Activated B cell treated with CpG ODN at 0.5 μM for 24 hours (primary cell): ENCODE measurements at regions of chr12 and their contacts with region 1.

Region 1: DNA sequence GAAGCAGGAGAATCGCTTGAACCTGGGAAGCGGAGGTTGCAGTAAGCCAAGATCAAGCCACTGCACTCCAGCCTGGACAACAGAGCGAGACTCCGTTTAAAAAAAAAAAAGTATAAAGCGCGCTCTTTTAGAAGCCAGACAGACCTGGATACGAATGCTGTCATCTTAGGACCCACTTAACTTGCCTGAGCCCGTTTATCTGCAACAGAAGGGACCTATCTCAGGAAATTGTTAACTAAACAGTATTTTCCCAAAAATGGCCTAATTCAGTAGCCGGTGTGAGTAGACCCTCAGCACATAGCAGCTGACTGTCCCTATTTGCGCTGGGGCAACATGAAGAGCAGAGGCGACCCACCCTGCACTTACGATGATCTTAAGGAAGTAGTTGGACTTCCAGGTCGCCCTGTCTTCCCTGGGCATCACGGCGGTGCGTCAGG is 529 bp downstream of the RPLP0 start:
- DNase-seq: no peak
- ATAC-seq: no peak
- H3K4me3 Mint-ChIP-seq: peak overlapping the region; percentile 95
- H3K27ac Mint-ChIP-seq: peak overlapping the region; percentile 98
- H3K4me1 Mint-ChIP-seq: peaks cover 42% of the 10 kb centered on the region
- H3K27me3 Mint-ChIP-seq: no peaks in the 10 kb centered on the region
- CTCF ChIP-seq: no peak

Region 2: DNA sequence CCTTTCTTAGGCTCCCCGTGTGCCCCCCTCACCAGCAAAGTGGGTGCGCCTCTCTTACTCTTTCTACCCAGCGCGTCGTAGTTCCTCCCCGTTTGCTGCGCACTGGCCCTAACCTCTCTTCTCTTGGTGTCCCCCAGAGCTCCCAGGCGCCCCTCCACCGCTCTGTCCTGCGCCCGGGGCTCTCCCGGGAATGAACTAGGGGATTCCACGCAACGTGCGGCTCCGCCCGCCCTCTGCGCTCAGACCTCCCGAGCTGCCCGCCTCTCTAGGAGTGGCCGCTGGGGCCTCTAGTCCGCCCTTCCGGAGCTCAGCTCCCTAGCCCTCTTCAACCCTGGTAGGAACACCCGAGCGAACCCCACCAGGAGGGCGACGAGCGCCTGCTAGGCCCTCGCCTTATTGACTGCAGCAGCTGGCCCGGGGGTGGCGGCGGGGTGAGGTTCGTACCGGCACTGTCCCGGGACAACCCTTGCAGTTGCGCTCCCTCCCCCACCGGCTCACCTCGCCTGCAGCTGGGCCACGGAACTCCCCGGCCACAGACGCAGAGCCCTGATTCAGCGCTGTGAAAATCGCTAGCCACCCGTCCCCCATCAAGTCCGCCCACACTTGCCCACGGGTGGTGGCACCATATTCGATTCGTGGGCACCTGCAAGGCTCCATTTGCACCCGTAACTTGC is 605.5 kb before region 1 on chr12:
- CTCF ChIA-PET with region 1: no interaction called
- POLR2A ChIA-PET with region 1: no interaction called
- intact Hi-C with region 1: no loop called
- DNase-seq: no peak
- ATAC-seq: no peak
- H3K4me3 Mint-ChIP-seq: no peak overlapping the region
- H3K27ac Mint-ChIP-seq: no peak overlapping the region
- H3K4me1 Mint-ChIP-seq: peaks cover 6% of the 10 kb centered on the region
- H3K27me3 Mint-ChIP-seq: peaks cover 67% of the 10 kb centered on the region
- CTCF ChIP-seq: no peak

Region 3: GRCh38 chr12:119902084-119902509 is 298.3 kb before region 1 on chr12:
- CTCF ChIA-PET with region 1: no interaction called
- POLR2A ChIA-PET with region 1: no interaction called
- intact Hi-C with region 1: no loop called
- DNase-seq: peak; percentile 27
- ATAC-seq: peak; percentile 82
- H3K4me3 Mint-ChIP-seq: no peak overlapping the region
- H3K27ac Mint-ChIP-seq: no peak overlapping the region
- H3K4me1 Mint-ChIP-seq: peaks cover 4% of the 10 kb centered on the region
- H3K27me3 Mint-ChIP-seq: no peaks in the 10 kb centered on the region
- CTCF ChIP-seq: no peak

Region 4: GRCh38 chr12:119988782-119989668 is 211.4 kb before region 1 on chr12 and contains the start of gene BICDL1:
- CTCF ChIA-PET with region 1: no interaction called
- POLR2A ChIA-PET with region 1: interaction called, 27 read pairs
- intact Hi-C with region 1: loop called (anchors 1 kb)
- DNase-seq: peak; percentile 96
- ATAC-seq: peak; percentile 83
- H3K4me3 Mint-ChIP-seq: peak within 1 kb of the TSS; percentile 83
- H3K27ac Mint-ChIP-seq: peak within 1 kb of the TSS; percentile 85
- H3K4me1 Mint-ChIP-seq: peaks cover 23% of the 10 kb centered on the region
- H3K27me3 Mint-ChIP-seq: no peaks in the 10 kb centered on the region
- CTCF ChIP-seq: no peak
- total RNA-seq, gene BICDL1: 15.1 and 16.8 TPM in 2 replicates

Region 5: DNA sequence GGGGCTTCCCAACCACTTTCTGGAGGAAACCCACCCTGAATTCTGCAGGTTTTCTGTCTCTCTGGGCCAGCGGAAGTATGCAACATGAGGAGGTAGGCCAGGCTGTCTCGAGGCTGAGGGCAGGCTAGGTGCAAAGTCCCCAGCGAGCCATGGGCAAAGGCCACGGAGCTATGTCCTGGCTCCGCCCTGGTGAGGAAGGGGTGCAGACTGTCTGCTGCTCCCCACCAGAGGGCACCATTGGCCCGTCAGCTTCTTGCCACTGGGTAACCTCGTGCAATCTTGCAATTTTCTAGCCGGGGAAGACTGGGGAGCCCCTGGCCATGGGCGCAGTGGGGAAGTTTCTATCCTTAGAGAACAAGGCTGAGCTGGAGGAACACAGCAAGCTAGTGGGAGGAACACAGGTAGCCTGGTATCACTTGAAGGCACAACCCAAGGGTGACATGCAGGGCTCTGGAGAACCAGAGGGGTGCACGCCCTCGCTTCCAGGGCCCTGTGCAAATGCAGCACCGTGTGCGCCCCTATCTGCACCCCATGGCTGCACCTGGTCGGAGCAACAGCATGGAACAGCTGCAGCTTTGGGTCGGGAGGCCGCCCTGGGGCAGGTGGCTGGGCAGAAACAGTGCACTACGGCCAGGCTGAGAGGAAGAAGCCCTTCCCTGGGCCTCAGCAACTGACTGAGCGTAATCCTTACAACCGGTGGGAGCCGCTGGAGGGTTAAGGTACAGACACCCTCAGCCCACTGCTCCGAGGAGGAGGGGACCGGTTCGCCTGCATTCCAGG is 28.1 kb after region 1 on chr12:
- CTCF ChIA-PET with region 1: interaction called, 14 read pairs
- POLR2A ChIA-PET with region 1: interaction called, 53 read pairs
- intact Hi-C with region 1: loop called (anchors 2 kb)
- DNase-seq: peak; percentile 74
- ATAC-seq: peak; percentile 93
- H3K4me3 Mint-ChIP-seq: no peak overlapping the region
- H3K27ac Mint-ChIP-seq: no peak overlapping the region
- H3K4me1 Mint-ChIP-seq: peaks cover 44% of the 10 kb centered on the region
- H3K27me3 Mint-ChIP-seq: peaks cover 25% of the 10 kb centered on the region
- CTCF ChIP-seq: peak; percentile 39

Region 6: DNA sequence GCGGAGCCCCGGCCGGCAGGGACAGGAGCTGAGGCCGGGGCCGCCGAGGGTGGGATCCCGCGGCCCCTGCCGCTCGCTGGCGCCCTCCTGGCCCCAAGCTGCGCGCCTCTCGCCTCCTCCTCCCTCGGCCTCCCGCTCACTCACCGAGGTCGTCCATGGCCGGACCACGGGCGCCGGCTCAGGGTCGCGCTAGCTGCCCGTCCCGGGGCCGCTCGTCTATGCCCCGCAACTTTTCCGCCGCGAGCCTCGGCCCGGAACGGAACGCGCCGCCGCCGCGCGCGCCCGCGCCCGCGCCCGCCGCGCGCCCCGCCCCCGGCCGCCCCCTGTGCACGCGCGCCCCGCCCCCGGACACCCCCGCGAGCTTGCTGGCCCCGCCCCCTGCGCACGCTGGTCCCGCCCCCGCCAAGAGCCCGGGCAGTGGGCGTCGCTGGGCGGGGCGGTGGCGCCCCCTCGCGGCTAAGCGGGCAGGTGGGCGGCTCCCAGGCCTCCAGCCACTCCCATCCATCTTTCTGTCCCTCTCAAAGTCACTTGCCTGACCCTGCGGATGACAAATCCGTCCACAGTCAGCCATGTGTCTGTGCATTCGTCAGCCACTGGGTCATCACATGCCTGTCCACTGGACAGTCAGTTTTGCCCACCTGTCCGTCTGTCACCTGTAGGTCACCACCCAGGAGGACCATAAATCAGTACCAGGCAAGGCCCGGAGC is 65.2 kb after region 1 on chr12 and contains the start of gene PXN:
- CTCF ChIA-PET with region 1: interaction called, 13 read pairs
- POLR2A ChIA-PET with region 1: interaction called, 30 read pairs
- intact Hi-C with region 1: loop called (anchors 1 kb)
- DNase-seq: peak; percentile 87
- ATAC-seq: peak; percentile 95
- H3K4me3 Mint-ChIP-seq: peak within 1 kb of the TSS; percentile 86
- H3K27ac Mint-ChIP-seq: peak within 1 kb of the TSS; percentile 59
- H3K4me1 Mint-ChIP-seq: peaks cover 18% of the 10 kb centered on the region
- H3K27me3 Mint-ChIP-seq: peaks cover 20% of the 10 kb centered on the region
- CTCF ChIP-seq: no peak
- total RNA-seq, gene PXN: 1.7 and 2.9 TPM in 2 replicates

Region 7: DNA sequence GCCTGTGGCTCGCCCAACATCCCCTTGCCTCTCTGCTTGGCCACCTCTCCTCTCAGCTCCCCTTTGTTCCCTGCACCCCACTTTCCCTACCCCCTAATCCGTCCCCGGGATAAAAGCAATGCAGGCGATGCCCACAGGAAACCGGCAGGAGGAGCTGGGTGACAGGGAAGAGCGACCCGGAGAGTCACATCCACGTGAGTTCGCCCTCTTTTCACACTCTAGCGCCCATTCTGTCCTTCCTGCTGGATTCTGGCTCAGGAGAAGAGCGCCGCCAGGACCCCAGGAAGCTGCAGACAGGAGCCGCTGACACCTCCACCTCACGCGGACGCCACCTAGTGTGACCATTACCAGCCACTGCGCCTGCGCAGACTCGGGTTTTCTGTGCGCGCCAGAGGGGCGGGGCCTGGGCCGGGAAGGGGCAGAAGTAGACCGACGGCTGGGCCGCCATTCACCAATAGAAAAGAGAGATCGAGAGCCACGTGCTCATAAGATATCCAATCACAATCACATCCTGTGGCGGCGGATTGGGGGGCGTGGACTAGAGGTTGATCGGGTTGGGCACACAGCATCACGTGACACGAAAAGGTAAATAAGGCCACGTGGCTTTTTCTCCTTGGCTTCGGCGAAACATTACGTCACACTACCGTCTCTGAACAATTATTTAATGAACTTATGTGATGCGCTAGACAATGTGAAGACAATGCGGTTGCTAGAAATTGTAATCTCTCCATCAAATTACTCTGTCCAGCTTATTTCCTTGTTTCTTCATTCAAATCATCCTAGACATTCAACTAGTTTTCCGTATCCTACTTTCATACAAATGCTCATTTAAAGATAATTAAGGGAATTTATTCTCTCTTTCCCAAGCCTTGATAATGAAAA is 117.1 kb after region 1 on chr12:
- CTCF ChIA-PET with region 1: no interaction called
- POLR2A ChIA-PET with region 1: interaction called, 11 read pairs
- intact Hi-C with region 1: loop called (anchors 1 kb)
- DNase-seq: peak; percentile 100
- ATAC-seq: peak; percentile 99
- H3K4me3 Mint-ChIP-seq: peak overlapping the region; percentile 88
- H3K27ac Mint-ChIP-seq: peak overlapping the region; percentile 90
- H3K4me1 Mint-ChIP-seq: peaks cover 13% of the 10 kb centered on the region
- H3K27me3 Mint-ChIP-seq: peaks cover 1% of the 10 kb centered on the region
- CTCF ChIP-seq: no peak

Region 8: GRCh38 chr12:120352117-120352516 is 151.7 kb after region 1 on chr12:
- CTCF ChIA-PET with region 1: no interaction called
- POLR2A ChIA-PET with region 1: no interaction called
- intact Hi-C with region 1: no loop called
- DNase-seq: no peak
- ATAC-seq: no peak
- H3K4me3 Mint-ChIP-seq: no peak overlapping the region
- H3K27ac Mint-ChIP-seq: no peak overlapping the region
- H3K4me1 Mint-ChIP-seq: no peaks in the 10 kb centered on the region
- H3K27me3 Mint-ChIP-seq: peaks cover 2% of the 10 kb centered on the region
- CTCF ChIP-seq: no peak